GM10248 (cell line): ENCODE measurements at regions of chr5 and their contacts with region 1.

Region 1: DNA sequence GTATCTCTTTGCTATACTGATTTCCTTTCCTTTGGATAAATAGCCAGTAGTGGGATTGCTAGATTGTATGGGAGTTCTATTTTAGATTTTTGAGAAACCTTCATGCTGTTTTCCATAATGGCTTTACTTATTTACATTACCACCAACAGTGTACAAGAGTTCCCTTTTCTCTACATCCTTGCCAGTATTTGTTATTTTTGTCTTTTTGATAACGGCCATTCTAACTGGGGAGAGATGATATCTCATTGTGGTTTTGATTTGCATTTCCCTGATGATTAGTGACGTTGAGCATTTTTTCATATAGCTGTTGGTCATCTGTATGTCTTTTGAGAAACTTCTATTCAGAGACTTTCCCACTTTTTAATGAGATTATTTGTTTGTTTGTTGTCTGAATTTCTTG is 25.8 kb downstream of the NADK2 start:
- DNase-seq: no peak
- CTCF ChIP-seq: no peak

Region 2: DNA sequence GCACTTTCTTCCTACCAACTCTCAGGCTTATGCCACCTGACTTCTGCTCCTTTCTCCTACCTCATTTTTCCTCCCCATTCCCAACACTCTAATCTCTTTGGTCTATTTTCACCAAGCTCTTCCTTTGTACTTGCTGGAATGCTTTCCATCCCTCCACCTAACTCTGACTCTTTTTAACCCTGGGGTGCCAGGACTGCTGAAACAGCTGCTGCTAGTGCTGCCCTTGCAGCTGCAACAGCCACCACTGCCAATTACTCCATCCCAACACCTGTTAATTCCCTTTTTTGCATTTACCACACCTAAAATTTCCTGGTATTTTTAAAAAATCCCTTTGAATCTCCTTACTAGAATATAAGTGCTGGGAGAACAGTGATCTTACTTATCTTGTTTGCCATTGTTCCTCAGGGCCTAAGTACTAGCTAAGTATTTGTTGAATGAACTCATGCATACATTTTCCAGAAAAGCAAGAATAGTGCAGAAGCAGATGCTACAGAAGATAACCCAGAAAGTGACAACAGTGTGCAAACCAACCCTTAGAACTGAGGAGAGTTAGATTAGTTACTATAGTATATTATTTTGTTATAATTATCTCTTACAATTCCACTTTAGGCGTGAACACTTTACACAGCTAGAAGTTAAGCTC is 14.4 kb after region 1 on chr5:
- CTCF ChIA-PET with region 1: interaction called, 14 read pairs
- POLR2A ChIA-PET with region 1: no interaction called
- DNase-seq: no peak
- CTCF ChIP-seq: no peak